Gastrocnemius medialis (tissue), 4 donors: ENCODE measurements at regions of chr18 and their contacts with region 1.

Region 1: GRCh38 chr18:26978812-26979341 is 113.4 kb upstream of the AQP4 start:
- DNase-seq: no peak
- ATAC-seq: no peak
- H3K4me3 ChIP-seq: no peak overlapping the region
- H3K27ac ChIP-seq: no peak overlapping the region
- H3K4me1 ChIP-seq: peaks cover 0 to 11% of the 10 kb centered on the region in 2 donors
- H3K27me3 ChIP-seq: no peaks in the 10 kb centered on the region
- CTCF ChIP-seq: no peak
- POLR2A ChIP-seq: no peak

Region 2: DNA sequence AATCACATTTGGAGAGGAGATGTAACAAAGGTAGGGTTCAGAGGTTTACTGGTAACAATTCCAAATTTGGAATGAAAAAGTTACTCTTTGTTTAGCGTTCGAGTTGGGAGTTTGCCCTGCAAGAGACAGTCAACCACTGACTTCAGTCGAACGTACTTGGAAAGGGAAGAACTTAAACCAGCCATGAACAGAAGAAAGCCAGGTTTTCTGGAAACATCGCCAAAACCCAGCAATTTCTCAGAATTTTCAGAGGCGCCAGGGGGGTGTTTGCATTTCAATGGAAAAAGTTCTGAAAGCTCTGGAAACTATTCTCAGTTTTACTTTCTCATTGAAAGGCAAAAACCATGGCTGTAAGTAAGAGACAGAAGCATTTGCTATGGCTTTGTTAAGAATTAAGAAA is 84.9 kb before region 1 on chr18:
- in situ Hi-C with region 1: no loop called
- intact Hi-C with region 1: no loop called
- DNase-seq: no peak
- ATAC-seq: no peak
- H3K4me3 ChIP-seq: peak overlapping the region in 2 of 4 donors; percentile 5 to 12
- H3K27ac ChIP-seq: no peak overlapping the region
- H3K4me1 ChIP-seq: no peaks in the 10 kb centered on the region
- H3K27me3 ChIP-seq: no peaks in the 10 kb centered on the region
- CTCF ChIP-seq: no peak
- POLR2A ChIP-seq: no peak

Region 3: DNA sequence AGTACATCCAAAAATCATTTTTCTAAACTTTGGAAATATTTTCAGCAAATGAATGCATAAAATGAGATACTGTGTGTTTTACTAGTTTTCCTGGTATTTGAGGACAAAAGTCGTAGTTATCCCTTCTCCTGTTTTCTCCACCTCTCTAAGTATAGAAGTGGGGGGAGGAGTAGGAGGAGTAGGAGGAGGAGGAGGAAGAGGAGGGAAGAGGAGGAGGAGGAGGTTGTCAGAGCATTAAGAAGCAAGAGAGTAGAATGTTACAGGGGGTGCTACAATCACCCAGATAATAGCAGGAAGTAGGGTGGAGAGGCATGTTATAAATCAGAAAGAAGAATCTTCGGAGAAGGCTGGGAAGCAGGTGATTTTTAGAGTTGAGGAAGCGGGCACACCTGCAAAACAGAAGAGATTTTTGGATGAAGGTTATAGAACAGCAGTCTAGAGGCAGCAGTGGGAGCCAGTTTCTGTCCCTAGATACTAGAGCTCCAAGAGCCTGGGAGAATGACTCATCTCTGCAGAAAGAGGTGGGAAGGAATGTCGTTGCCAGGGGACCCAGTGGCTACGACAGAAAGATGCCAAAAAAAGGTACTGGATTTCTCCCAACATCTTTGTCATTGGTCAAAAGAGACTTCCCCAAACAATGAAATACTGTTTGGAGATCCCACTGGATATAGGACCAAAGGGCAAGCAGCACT is 69.1 kb before region 1 on chr18:
- in situ Hi-C with region 1: no loop called
- intact Hi-C with region 1: loop called (anchors 2 kb)
- DNase-seq: no peak
- ATAC-seq: no peak
- H3K4me3 ChIP-seq: no peak overlapping the region
- H3K27ac ChIP-seq: no peak overlapping the region
- H3K4me1 ChIP-seq: peaks cover 0 to 6% of the 10 kb centered on the region in 2 donors
- H3K27me3 ChIP-seq: no peaks in the 10 kb centered on the region
- CTCF ChIP-seq: no peak
- POLR2A ChIP-seq: no peak

Region 4: GRCh38 chr18:27312153-27312552 is 333.3 kb after region 1 on chr18:
- in situ Hi-C with region 1: no loop called
- intact Hi-C with region 1: no loop called
- DNase-seq: no peak
- ATAC-seq: no peak
- H3K4me3 ChIP-seq: no peak overlapping the region
- H3K27ac ChIP-seq: no peak overlapping the region
- H3K4me1 ChIP-seq: peaks cover 3 to 9% of the 10 kb centered on the region in 2 donors
- H3K27me3 ChIP-seq: no peaks in the 10 kb centered on the region
- CTCF ChIP-seq: no peak
- POLR2A ChIP-seq: no peak

Region 5: DNA sequence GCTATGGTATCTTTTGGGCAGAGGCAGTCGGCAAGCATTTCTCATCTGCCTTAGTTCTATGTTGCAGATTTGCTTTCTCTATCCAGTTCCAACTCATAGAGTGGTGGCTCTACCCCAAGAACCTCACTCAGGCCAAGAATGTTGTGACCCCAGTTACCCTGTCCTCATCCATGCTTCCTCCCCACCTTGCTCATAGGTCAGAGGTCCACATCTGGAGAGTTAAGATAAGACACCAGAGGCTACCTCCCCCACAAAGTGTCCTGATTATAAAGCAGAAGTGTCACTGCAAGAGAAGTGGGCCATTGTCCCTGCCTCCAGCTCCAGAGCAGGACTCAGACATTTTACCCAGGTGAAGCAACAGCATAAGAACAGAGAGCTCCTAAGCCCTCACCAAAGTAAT is 483.1 kb after region 1 on chr18:
- in situ Hi-C with region 1: no loop called
- intact Hi-C with region 1: no loop called
- DNase-seq: no peak
- ATAC-seq: no peak
- H3K4me3 ChIP-seq: no peak overlapping the region
- H3K27ac ChIP-seq: no peak overlapping the region
- H3K4me1 ChIP-seq: no peaks in the 10 kb centered on the region
- H3K27me3 ChIP-seq: no peaks in the 10 kb centered on the region
- CTCF ChIP-seq: no peak
- POLR2A ChIP-seq: no peak